ENCODE measurements at regions of chr14 and their contacts with region 1.

Region 1: GRCh38 chr14:59897761-59898383 is 22.1 kb upstream of the LRRC9 start:
- DNase-seq: peak; percentile 39
- ATAC-seq: peak; percentile 94
- H3K4me3 Mint-ChIP-seq: no peak overlapping the region
- H3K27ac Mint-ChIP-seq: no peak overlapping the region
- H3K4me1 Mint-ChIP-seq: no peaks in the 10 kb centered on the region
- H3K27me3 Mint-ChIP-seq: 0 out of 2 replicates have a peak, but pooled peaks cover 2% of the 10 kb centered on the region
- CTCF ChIP-seq: no peak

Region 2: DNA sequence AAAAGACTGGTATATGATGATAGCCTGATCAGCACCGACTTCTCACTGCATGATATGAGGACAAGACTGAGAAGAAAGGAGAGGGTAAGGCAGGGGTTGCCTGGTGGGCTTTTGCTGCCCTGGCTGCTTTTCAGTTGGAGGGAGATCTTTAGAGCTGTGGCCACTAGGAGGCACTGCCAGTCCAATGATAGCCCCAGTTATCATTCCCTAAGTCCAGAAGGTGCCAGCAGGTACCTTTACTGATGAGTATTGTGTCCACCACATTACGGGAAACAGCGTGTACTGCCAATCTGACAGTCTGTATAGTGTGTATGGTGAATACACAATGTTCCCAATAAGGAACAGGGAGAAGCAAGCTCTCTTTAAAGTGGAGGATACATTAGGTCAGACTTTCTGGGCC is 265.5 kb before region 1 on chr14:
- CTCF ChIA-PET with region 1: interaction called, 47 read pairs
- POLR2A ChIA-PET with region 1: no interaction called
- DNase-seq: peak; percentile 64
- ATAC-seq: peak; percentile 65
- H3K4me3 Mint-ChIP-seq: no peak overlapping the region
- H3K27ac Mint-ChIP-seq: no peak overlapping the region
- H3K4me1 Mint-ChIP-seq: peaks cover 15% of the 10 kb centered on the region
- H3K27me3 Mint-ChIP-seq: peaks cover 27% of the 10 kb centered on the region
- CTCF ChIP-seq: peak; percentile 53; the same call in 1 of the 2 replicates

Region 3: GRCh38 chr14:59728321-59728720 is 169.6 kb before region 1 on chr14:
- CTCF ChIA-PET with region 1: interaction called, 14 read pairs
- POLR2A ChIA-PET with region 1: no interaction called
- DNase-seq: no peak
- ATAC-seq: no peak
- H3K4me3 Mint-ChIP-seq: no peak overlapping the region
- H3K27ac Mint-ChIP-seq: no peak overlapping the region
- H3K4me1 Mint-ChIP-seq: no peaks in the 10 kb centered on the region
- H3K27me3 Mint-ChIP-seq: no peaks in the 10 kb centered on the region
- CTCF ChIP-seq: no peak

Region 4: DNA sequence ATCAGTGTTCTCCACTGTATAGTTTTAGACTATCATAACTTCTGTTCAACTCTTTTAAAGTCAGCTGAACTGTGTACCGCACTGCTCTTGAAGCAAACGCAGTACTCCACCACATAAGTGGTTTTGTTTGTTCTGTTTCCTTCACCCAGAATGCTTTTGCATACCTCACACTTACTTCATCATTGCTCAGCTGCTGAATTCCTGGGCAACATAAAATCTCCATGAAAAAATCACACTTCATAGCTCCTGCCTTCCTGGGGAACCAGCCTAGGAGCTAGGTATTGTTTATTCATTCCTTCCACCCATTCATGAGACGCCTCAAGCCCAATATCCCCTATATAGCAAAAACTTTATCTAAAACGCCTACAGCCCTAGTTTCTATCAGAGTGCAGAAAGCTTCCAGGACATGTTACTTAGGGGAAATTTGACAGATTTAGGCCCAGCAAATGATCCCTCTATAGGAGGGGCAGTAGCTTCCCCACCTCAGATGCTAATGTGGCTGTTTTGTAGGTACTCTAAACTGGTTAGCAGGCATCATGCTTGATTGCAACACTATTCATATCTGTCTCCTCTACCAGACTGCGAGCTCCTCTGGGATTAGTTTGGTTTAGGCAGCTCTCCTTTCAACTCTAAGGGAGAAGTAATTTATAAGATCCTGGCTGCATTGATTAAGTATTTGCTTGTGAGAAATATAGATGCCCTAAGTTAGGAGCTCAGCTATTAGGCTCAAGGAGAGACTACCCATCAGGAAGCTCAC is 66.6 kb after region 1 on chr14:
- CTCF ChIA-PET with region 1: interaction called, 11 read pairs
- POLR2A ChIA-PET with region 1: interaction called, 4 read pairs
- DNase-seq: no peak
- ATAC-seq: peak; percentile 25; the same call in 1 of the 2 replicates
- H3K4me3 Mint-ChIP-seq: peak overlapping the region; percentile 75
- H3K27ac Mint-ChIP-seq: no peak overlapping the region
- H3K4me1 Mint-ChIP-seq: peaks cover 10% of the 10 kb centered on the region; the same call in 1 of the 2 replicates
- H3K27me3 Mint-ChIP-seq: no peaks in the 10 kb centered on the region
- CTCF ChIP-seq: no peak

Measured in WTC11 (cell line).